Heart right ventricle (tissue), 16 donors: ENCODE measurements at regions of chr9 and their contacts with region 1.

Region 1: DNA sequence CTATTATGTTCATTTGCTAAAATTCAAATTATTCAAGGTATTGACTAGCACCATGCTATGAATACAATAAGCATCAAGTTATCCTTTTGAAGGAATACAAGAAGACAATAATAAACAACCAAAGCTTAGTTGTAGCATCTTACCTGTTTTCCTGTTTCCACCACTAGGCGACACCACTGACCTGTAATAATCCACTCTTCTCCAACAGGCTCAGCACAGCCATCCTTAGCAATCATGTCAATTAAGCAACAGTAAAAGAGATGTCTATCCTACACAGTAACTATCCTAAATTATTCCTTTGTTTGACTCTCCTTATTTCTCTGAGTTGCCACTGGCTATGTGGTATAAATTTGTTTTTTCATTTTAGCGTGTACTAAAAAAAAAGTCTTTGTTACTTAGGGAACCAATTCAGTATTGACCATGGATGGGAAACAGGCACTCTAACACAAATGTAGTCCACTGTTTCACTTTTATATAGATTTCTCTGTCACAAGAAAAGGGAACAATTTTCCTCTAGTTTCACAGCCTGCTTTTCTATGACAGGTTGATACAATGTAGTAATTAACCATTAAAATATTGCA is 46.2 kb downstream of the PCA3 start:
- DNase-seq: peak in 1 of 2 donors; percentile 25
- ATAC-seq: peak in 6 of 8 donors; percentile 46 to 83 (median 58)
- H3K4me3 ChIP-seq: no peak overlapping the region
- H3K27ac ChIP-seq: no peak overlapping the region
- H3K4me1 ChIP-seq: no peaks in the 10 kb centered on the region
- H3K27me3 ChIP-seq: peaks cover 0 to 37% (median 23%) of the 10 kb centered on the region in 7 donors
- CTCF ChIP-seq: peak; percentile 36 to 80 (median 70)

Region 2: GRCh38 chr9:76996700-76997099 is 186.2 kb after region 1 on chr9:
- intact Hi-C with region 1: loop called (anchors 1 to 10 kb)
- DNase-seq: peak; percentile 25 to 51
- ATAC-seq: peak in 6 of 8 donors; percentile 65 to 95 (median 74)
- H3K4me3 ChIP-seq: no peak overlapping the region
- H3K27ac ChIP-seq: no peak overlapping the region
- H3K4me1 ChIP-seq: peaks cover 0 to 5% (median 0%) of the 10 kb centered on the region in 9 donors
- H3K27me3 ChIP-seq: peaks cover 0 to 14% (median 5%) of the 10 kb centered on the region in 7 donors
- CTCF ChIP-seq: peak in 8 of 9 donors; percentile 9 to 66 (median 54)

Region 3: DNA sequence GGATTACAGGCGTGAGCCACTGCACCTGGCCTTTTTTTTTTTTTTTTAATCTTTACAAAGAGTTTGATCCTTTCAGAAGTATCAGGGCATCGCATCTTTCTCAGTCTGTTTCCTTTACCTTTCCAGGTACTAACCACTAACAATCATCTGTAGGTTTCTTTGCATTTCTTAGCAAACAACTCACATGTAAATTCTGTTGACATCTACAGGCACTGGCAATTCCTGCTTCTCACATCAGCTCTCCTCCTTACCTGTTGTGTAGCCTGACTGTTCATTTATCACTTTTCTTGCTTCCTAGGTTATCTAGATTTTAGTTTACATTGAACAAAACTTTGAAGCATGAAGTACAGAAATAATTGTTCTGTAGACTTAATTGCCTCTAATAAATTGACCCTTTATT is 339.4 kb after region 1 on chr9:
- intact Hi-C with region 1: loop called in 9 of 10 experiments (anchors 1 to 10 kb)
- DNase-seq: no peak
- ATAC-seq: no peak
- H3K4me3 ChIP-seq: no peak overlapping the region
- H3K27ac ChIP-seq: no peak overlapping the region
- H3K4me1 ChIP-seq: no peaks in the 10 kb centered on the region
- H3K27me3 ChIP-seq: peaks cover 0 to 6% (median 0%) of the 10 kb centered on the region in 7 donors
- CTCF ChIP-seq: no peak

Region 4: GRCh38 chr9:77839459-77840140 is 1029.1 kb after region 1 on chr9:
- intact Hi-C with region 1: no loop called
- DNase-seq: no peak
- ATAC-seq: peak in 1 of 8 donors; percentile 77
- H3K4me3 ChIP-seq: no peak overlapping the region
- H3K27ac ChIP-seq: peak overlapping the region in 2 of 10 donors; percentile 32 to 39
- H3K4me1 ChIP-seq: peaks cover 0 to 55% (median 9%) of the 10 kb centered on the region in 9 donors
- H3K27me3 ChIP-seq: no peaks in the 10 kb centered on the region
- CTCF ChIP-seq: no peak